Activated CD8-positive, alpha-beta T cell treated with anti-CD3 and anti-CD28 coated beads, Interleukin-2, amount 10 ng/mL, durations not matched to agents 7 days and 5 days (primary cell): ENCODE measurements at regions of chr11 and their contacts with region 1.

Region 1: DNA sequence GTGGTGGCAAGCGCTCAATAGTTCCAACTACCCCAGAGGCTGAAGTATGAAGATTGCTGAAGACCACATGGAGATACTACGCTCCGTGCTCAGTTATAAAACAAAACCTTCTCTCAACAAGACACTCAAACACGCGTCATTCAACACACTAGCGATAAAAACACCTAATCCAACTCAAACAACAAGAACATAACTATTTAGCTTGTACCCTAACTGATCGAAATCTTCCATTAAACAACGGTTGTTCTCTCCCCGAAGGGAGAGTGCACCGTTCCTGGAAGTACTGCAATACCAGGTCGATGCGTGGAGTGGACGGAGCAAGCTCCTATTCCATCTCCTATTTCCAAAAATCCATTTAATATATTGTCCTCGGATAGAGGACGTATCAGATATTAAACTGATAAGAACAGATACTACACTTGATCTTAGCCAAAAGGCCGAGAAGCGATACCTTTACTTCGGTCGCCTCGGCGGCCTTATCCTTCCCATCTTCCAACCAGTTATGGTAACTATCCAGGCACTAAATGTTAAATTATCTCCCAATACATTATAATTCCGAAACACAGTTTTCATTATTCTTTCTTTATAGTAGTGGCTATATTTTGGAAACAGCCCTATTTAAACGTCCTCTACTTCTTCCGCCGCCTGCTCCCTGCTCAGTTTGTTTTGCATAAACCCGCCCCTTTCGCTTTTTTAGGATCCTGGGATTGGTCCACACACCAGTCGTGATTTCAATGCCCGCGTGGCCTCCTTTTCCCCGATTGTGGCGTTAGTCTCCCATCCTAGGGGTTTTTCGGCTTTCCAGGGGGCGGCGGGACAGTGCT is 2.2 kb upstream of the WDR74 start:
- DNase-seq: peak; percentile 92
- ATAC-seq: peak; percentile 74
- H3K4me3 Mint-ChIP-seq: no peak overlapping the region
- H3K27ac Mint-ChIP-seq: no peak overlapping the region
- H3K4me1 Mint-ChIP-seq: peaks cover 20% of the 10 kb centered on the region
- H3K27me3 Mint-ChIP-seq: no peaks in the 10 kb centered on the region

Region 2: GRCh38 chr11:62601394-62602140 is 240.0 kb before region 1 on chr11 and contains the start of gene MTA2:
- CTCF ChIA-PET with region 1: no interaction called
- POLR2A ChIA-PET with region 1: interaction called, 18 read pairs
- DNase-seq: peak; percentile 100
- ATAC-seq: peak; percentile 88
- H3K4me3 Mint-ChIP-seq: peak within 1 kb of the TSS; percentile 89
- H3K27ac Mint-ChIP-seq: peak within 1 kb of the TSS; percentile 88
- H3K4me1 Mint-ChIP-seq: peaks cover 52% of the 10 kb centered on the region
- H3K27me3 Mint-ChIP-seq: no peaks in the 10 kb centered on the region
- total RNA-seq, gene MTA2: 249 to 273 TPM

Region 3: GRCh38 chr11:62678770-62679696 is 162.5 kb before region 1 on chr11 and contains the start of gene UBXN1:
- CTCF ChIA-PET with region 1: interaction called, 3 read pairs
- POLR2A ChIA-PET with region 1: interaction called, 24 read pairs
- DNase-seq: peak; percentile 89
- ATAC-seq: peak; percentile 88
- H3K4me3 Mint-ChIP-seq: peak within 1 kb of the TSS; percentile 92
- H3K27ac Mint-ChIP-seq: peak within 1 kb of the TSS; percentile 87
- H3K4me1 Mint-ChIP-seq: peaks cover 42% of the 10 kb centered on the region
- H3K27me3 Mint-ChIP-seq: no peaks in the 10 kb centered on the region
- total RNA-seq, gene UBXN1: 107 to 118 TPM

Region 4: GRCh38 chr11:62771144-62772021 is 70.2 kb before region 1 on chr11 and contains the start of gene TAF6L:
- CTCF ChIA-PET with region 1: no interaction called
- POLR2A ChIA-PET with region 1: interaction called, 54 read pairs
- DNase-seq: peak; percentile 96
- ATAC-seq: peak; percentile 91
- H3K4me3 Mint-ChIP-seq: peak within 1 kb of the TSS; percentile 91
- H3K27ac Mint-ChIP-seq: peak within 1 kb of the TSS; percentile 93
- H3K4me1 Mint-ChIP-seq: peaks cover 27% of the 10 kb centered on the region
- H3K27me3 Mint-ChIP-seq: no peaks in the 10 kb centered on the region
- total RNA-seq, gene TAF6L: 21.8 to 23.7 TPM

Region 5: DNA sequence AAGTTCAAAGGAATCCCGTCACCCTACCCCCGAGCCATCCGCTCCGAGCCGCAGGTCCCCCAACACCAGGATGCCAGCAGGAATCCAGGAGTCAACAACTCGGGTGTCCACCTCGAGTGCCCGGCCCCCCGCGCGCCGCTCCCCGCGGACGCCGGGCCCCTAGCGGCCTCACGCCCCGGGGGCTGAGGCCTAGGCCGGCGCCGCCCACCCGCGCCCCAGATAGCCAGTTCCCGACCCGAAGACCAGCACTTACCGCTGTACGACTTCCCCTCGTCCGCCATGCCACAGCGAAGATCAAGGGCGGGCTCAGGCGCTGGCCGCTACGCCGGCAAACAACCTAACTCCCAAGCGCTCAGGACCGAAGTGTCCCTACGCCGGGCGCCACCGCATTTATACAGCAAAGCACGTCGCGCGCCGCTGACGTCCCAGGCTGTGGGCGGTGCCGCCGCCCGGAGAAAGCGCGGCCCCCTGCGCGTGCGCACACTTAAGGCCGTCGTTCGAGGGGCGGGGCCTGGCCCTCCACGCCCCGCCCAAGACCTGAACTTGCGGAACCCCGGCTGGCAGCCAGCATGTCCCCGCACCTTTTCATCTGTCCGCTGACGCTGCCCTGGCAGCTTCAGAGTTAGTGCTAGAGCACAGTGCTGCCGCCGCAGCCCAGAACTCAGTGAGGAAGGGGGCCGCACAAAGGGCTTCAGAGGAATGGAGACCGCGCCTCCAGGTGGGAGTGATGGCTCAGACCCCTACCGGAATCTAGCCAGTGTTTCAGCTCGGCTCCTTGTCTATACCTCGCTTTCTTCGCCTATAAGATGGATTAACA is 36.3 kb before region 1 on chr11 and contains the start of gene NXF1:
- CTCF ChIA-PET with region 1: no interaction called
- POLR2A ChIA-PET with region 1: interaction called, 40 read pairs
- DNase-seq: peak; percentile 95
- ATAC-seq: peak; percentile 81
- H3K4me3 Mint-ChIP-seq: peak within 1 kb of the TSS; percentile 99
- H3K27ac Mint-ChIP-seq: peak within 1 kb of the TSS; percentile 95
- H3K4me1 Mint-ChIP-seq: peaks cover 37% of the 10 kb centered on the region
- H3K27me3 Mint-ChIP-seq: no peaks in the 10 kb centered on the region
- total RNA-seq, gene NXF1: 110 to 111 TPM

Region 6: GRCh38 chr11:62860835-62861563 is 19.4 kb after region 1 on chr11:
- CTCF ChIA-PET with region 1: interaction called, 7 read pairs
- POLR2A ChIA-PET with region 1: interaction called, 507 read pairs
- DNase-seq: no peak
- ATAC-seq: no peak
- H3K4me3 Mint-ChIP-seq: no peak overlapping the region
- H3K27ac Mint-ChIP-seq: peak overlapping the region; percentile 67
- H3K4me1 Mint-ChIP-seq: peaks cover 63% of the 10 kb centered on the region
- H3K27me3 Mint-ChIP-seq: no peaks in the 10 kb centered on the region